AG04450 (cell line): ENCODE measurements at regions of chr9 and their contacts with region 1.

Region 1: GRCh38 chr9:83544002-83544698 is 5.9 kb upstream of the FRMD3 start:
- DNase-seq: no peak
- H3K4me3 ChIP-seq: no peak overlapping the region
- H3K27ac ChIP-seq: no peak overlapping the region
- H3K27me3 ChIP-seq: peaks cover 2% of the 10 kb centered on the region
- CTCF ChIP-seq: peak; percentile 55

Region 2: GRCh38 chr9:83219152-83219923 is 324.8 kb before region 1 on chr9:
- CTCF ChIA-PET with region 1: interaction called, 17 read pairs
- POLR2A ChIA-PET with region 1: no interaction called
- DNase-seq: no peak
- H3K4me3 ChIP-seq: peak overlapping the region; percentile 45
- H3K27ac ChIP-seq: no peak overlapping the region
- H3K27me3 ChIP-seq: no peaks in the 10 kb centered on the region
- CTCF ChIP-seq: peak; percentile 49

Region 3: GRCh38 chr9:83334320-83334719 is 209.8 kb before region 1 on chr9:
- CTCF ChIA-PET with region 1: interaction called, 27 read pairs
- POLR2A ChIA-PET with region 1: no interaction called
- DNase-seq: peak; percentile 3
- H3K4me3 ChIP-seq: no peak overlapping the region
- H3K27ac ChIP-seq: no peak overlapping the region
- H3K27me3 ChIP-seq: no peaks in the 10 kb centered on the region
- CTCF ChIP-seq: peak; percentile 67

Region 4: GRCh38 chr9:83491995-83492394 is 52.2 kb before region 1 on chr9:
- CTCF ChIA-PET with region 1: no interaction called
- POLR2A ChIA-PET with region 1: no interaction called
- DNase-seq: no peak
- H3K4me3 ChIP-seq: no peak overlapping the region
- H3K27ac ChIP-seq: no peak overlapping the region
- H3K27me3 ChIP-seq: no peaks in the 10 kb centered on the region
- CTCF ChIP-seq: no peak